ENCODE measurements at regions of chr20 and their contacts with region 1.

Region 1: DNA sequence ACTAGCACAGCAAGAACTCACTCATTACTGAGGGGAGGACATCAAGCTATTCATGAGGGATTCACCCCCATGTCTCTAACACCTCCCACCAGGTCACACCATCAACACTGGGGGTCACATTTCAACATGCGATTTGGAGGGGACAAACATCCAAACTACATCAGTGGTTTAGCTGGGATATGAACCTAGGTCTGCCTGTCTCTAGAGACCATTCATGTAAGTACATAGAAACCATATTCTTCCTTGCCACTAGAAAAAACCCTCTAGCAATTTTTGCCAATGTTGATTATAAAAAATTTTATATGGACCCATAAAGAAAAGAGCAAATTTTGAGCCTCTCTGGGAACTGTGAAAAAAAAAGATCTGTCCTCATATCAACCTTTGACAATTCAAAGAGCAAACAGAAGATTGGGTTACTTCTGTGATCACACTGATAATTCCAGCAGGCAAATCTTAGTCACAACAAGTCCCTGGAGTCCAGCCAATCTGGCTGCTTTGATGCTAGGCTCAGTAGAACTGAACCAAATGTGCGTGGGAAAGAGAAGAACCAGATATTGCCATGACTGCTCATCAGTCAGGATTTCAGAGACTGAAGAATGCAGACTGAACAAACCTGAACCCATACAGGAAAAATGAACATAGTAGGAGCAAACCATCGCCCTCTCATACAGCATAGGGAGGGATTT is 438.2 kb upstream of the FLRT3 start:
- DNase-seq: no peak
- H3K4me3 Mint-ChIP-seq: no peak overlapping the region
- H3K27ac Mint-ChIP-seq: no peak overlapping the region
- H3K4me1 Mint-ChIP-seq: no peaks in the 10 kb centered on the region
- H3K27me3 Mint-ChIP-seq: no peaks in the 10 kb centered on the region

Region 2: GRCh38 chr20:14612391-14612790 is 163.3 kb before region 1 on chr20:
- intact Hi-C with region 1: no loop called
- DNase-seq: no peak
- H3K4me3 Mint-ChIP-seq: no peak overlapping the region
- H3K27ac Mint-ChIP-seq: no peak overlapping the region
- H3K4me1 Mint-ChIP-seq: no peaks in the 10 kb centered on the region
- H3K27me3 Mint-ChIP-seq: no peaks in the 10 kb centered on the region

Region 3: GRCh38 chr20:14724468-14724867 is 51.2 kb before region 1 on chr20:
- intact Hi-C with region 1: loop called (anchors 10 kb)
- DNase-seq: no peak
- H3K4me3 Mint-ChIP-seq: no peak overlapping the region
- H3K27ac Mint-ChIP-seq: no peak overlapping the region
- H3K4me1 Mint-ChIP-seq: no peaks in the 10 kb centered on the region
- H3K27me3 Mint-ChIP-seq: no peaks in the 10 kb centered on the region

Measured in activated T-helper 1 cell treated with anti-CD3 and anti-CD28 coated beads, Interleukin-12 subunit alpha, Interleukin-12 subunit beta, Interleukin-2, Interleukin-4 antibody, amounts not matched to agents 30 ng/mL and 10 ng/mL and 1 ng/mL, durations not matched to agents 14 hours and 24 hours and 36 hours (primary cell).